Cardiac septum (tissue), 1 donor: ENCODE measurements at regions of chr11 and their contacts with region 1.

Region 1: GRCh38 chr11:6389921-6390724 is at the start of gene SMPD1:
- DNase-seq: peak; percentile 98
- total RNA-seq, gene SMPD1: 57.8 TPM

Region 2: DNA sequence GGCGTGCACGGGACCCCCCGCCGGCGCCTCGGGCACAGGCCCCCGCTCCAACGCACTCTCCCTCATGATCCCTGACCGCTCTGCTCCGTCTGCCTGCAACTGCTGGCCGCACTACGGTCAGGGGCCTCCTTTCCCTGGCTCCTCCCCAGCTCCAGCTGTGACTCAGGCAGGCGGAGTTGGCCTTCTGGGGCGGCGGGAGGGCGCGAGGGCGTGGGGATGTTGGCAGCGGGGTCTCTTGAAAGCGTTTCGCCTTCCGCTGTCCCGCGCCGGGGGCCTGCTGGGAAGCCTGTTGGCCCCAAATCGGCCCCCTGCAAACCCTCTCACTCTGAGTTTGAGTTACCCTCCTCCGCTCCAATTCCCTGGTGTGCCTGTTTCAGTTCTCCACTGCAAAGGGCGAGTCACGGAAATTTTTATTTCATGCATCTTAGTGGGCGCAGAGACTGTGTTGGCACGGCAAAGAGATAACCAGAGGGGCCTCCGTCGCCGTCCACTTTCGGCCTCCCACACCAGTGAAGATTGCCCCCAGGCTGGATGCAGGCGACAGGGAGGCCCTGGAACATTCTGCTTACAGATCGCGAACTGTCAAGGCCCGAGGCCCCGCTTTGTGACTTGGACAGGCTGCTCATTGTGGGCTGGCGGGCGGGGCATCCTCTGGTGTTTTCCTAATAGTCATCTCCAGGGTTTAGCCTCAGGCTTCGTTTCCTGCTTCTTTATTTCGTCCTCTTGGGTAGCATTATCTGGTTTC is 69.5 kb before region 1 on chr11 and contains the start of gene CAVIN3:
- intact Hi-C with region 1: no loop called
- DNase-seq: peak; percentile 93
- total RNA-seq, gene CAVIN3: 77.6 TPM

Region 3: GRCh38 chr11:6419009-6419631 is 29.0 kb after region 1 on chr11 and contains the start of gene APBB1:
- intact Hi-C with region 1: loop called (anchors 2 kb)
- DNase-seq: no peak
- total RNA-seq, gene APBB1: 72.0 TPM

Region 4: DNA sequence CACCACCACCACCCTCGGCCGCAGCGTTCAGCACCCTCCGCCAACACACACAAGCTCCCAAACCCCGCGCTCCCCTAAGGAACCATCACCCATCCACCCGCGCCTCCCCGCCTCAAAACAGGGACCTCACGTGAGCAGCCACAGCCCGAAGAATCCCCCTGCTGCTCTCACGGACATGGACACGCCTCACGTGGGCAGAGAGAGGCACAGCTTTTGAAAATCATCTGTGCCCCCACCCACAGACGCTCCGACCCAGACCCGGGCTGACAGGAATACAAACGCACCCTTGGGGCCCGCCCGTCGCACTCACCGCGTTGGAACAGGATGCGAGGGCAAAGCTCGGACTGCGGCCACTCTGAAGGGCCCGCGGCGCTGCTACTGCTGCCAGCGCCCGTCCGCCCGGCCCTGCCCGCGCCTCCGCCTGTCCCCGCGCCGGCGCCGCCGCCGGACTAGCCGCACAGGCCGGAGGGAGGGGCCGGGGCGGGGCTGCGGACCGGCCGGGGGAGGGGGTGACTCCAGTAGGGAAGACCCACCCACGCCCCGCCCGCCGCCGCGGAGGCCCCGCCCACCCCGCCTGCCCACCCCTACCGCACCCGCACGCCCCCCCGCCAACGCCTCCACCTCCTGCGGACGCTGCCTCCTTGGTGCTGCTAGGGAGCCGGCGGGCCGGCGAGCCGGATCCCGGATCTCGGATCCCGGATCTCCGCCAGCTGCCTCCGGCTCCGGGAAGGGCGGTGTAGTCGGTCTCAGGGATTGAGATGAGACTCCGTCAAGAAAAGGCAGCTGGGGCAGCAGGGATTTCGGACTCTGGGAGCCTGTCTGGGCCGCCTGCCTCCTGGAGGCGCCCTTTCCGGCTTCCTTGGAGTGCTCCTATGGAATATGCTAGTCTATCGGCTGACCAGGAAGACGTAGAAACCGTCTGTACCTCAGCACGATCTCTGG is 83.6 kb after region 1 on chr11 and contains the start of gene TRIM3:
- intact Hi-C with region 1: loop called (anchors 2 kb)
- DNase-seq: peak; percentile 96
- total RNA-seq, gene TRIM3: 11.7 TPM

Region 5: DNA sequence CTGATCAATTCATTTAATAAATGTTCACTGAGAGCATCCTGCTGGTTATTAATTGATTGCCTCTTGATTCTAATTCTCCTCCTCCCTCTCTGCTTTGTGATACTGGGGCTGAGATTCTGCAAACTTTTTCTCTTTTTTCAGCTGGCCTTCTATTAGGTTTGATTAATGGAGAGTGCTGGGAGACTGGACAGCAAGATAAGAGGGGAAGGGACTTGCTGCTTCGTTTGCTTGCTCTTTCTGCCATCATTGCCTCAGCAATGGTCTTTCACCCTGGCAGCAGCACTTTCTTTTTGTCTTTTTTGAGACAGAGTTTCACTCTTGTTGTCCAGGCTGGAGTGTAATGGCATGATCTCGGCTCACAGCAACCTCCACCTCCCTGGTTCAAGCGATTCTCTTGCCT is 114.0 kb after region 1 on chr11:
- intact Hi-C with region 1: loop called (anchors 5 kb)
- DNase-seq: no peak

Region 6: GRCh38 chr11:6603287-6604080 is 213.4 kb after region 1 on chr11 and contains the starts of genes ILK and RRP8:
- intact Hi-C with region 1: loop called (anchors 2 kb)
- DNase-seq: peak; percentile 98
- total RNA-seq, gene ILK: 229 TPM
- total RNA-seq, gene RRP8: 21.3 TPM

Region 7: DNA sequence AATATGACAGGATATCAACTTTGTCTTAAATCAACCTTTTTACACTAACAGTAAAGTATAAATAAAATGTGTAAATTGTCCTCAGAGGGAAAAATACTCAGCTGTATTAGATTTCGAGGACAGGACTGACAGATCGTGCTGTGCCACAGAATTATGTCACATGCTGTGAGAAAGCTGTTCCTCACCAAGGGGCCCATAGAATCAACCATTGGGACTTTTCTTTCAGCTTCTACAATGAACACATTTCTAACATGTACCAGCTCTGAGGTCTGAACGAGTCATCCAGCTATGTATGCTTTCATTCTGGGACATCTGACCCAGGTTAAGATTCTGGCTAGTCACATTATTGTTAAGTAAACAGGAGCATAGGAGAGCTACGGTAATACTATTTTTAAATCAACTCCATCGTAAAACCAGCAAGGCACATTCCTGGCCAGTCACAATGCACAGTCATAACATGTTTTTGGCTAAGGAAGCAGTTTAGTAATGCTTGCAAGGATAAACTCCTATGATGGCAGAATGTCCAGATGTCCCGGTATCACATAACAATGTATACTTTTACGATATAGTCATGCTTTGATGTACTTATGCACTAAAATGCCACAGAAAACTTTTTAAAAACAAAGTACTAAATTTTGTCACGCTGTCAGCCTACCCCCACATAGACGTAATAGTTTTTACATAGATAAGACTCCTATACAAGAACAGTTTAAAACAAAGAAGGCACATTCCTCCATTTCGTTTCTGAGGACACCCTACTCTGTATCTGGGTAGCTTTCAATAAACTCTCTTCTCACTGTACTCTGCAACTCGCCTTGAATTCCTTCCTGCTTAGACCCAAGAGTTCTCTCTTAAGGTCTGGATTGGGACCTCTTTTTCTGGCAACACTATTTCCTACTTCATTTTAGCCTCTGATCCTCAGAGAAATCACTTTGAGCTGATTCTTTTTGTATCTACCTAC is 602.6 kb after region 1 on chr11:
- intact Hi-C with region 1: no loop called
- DNase-seq: no peak